Naive thymus-derived CD4-positive, alpha-beta T cell (primary cell): ENCODE measurements at regions of chr2 and their contacts with region 1.

Region 1: DNA sequence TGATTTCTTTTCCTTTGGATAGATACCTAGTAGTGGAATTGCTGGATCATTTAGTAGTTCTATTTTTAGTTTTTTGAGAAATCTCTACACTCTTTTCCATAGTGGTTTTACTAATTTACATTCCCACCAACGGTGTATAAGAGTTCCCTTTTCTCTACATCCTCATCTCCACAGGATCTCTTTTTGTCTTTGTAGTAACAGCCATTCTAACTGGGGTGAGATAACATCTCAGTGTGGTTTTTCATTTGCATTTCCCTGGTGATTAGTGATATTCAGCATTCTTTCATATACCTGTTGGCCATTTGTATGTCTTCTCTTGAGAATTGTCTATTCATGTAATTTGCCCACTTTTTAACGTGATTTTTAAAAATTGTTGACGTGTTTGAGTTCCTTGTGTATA is 13.8 kb downstream of the RFTN2 start:
- DNase-seq: no peak
- ATAC-seq: no peak
- H3K4me3 ChIP-seq: no peak overlapping the region
- H3K4me3 Mint-ChIP-seq: no peak overlapping the region
- H3K27ac ChIP-seq: no peak overlapping the region
- H3K27ac Mint-ChIP-seq: no peak overlapping the region
- H3K4me1 ChIP-seq: no peaks in the 10 kb centered on the region
- H3K4me1 Mint-ChIP-seq: no peaks in the 10 kb centered on the region
- H3K27me3 ChIP-seq: no peaks in the 10 kb centered on the region
- H3K27me3 Mint-ChIP-seq: peaks cover 0 to 4% (median 0%) of the 10 kb centered on the region in 5 donors

Region 2: GRCh38 chr2:197675711-197676188 is 14.1 kb after region 1 on chr2:
- CTCF ChIA-PET with region 1: no interaction called
- POLR2A ChIA-PET with region 1: no interaction called
- intact Hi-C with region 1: loop called in 1 of 2 experiments (anchors 1 kb)
- DNase-seq: no peak
- ATAC-seq: no peak
- H3K4me3 ChIP-seq: no peak overlapping the region
- H3K4me3 Mint-ChIP-seq: no peak overlapping the region
- H3K27ac ChIP-seq: no peak overlapping the region
- H3K27ac Mint-ChIP-seq: no peak overlapping the region
- H3K4me1 ChIP-seq: no peaks in the 10 kb centered on the region
- H3K4me1 Mint-ChIP-seq: no peaks in the 10 kb centered on the region
- H3K27me3 ChIP-seq: peaks cover 6% of the 10 kb centered on the region in 2 donors
- H3K27me3 Mint-ChIP-seq: peaks cover 9 to 33% (median 14%) of the 10 kb centered on the region in 5 donors